Activated CD4-positive, alpha-beta T cell treated with anti-CD3 and anti-CD28 coated beads, Interleukin-2, amount 10 ng/mL, durations not matched to agents 7 days and 5 days (primary cell): ENCODE measurements at regions of chr15 and their contacts with region 1.

Region 1: DNA sequence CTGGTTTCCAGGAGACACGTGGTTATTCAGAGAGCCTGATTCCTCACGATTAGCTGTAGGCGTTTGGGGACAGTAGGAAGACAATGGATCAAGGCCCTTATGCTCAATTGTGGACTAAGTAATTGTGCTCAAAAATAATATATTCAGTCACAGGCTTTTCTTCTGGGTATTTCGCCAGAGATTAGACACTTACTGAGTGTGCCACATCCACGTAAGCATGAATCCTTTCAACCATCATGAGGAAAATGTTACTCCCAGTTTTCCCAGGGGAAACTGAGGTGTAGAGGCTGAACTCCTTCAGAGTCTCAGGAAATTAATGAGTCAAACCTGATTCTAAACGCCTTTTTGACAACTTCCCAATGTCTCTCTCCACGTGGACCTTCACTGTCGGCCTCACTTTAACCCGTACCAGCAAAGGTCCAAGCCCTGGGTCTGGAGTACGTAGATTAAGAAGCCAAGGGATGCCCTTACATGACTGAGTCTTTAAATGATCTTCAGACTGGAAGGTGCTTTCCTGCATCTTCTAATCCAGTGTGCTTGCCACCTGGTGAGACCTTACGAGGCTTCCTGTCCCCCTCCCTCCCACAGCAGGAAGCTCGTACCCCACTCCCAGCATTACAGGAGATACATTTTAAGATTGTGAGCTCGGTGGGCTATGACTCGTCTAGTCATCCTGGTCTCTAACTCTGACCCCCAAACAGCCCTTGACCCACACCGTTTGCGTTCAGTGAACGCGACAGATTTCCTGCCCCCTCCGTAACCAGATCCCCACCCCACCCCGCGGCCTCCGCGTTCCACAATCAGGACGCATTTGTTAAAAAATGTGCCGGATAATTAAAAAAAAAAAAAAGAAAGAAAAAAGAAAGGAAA is 1.7 kb downstream of the PKM start:
- DNase-seq: peak; percentile 52
- H3K4me3 Mint-ChIP-seq: peak overlapping the region; percentile 93
- H3K27ac Mint-ChIP-seq: peak overlapping the region; percentile 97
- H3K4me1 Mint-ChIP-seq: peaks cover 58% of the 10 kb centered on the region
- H3K27me3 Mint-ChIP-seq: no peaks in the 10 kb centered on the region

Region 2: GRCh38 chr15:72199711-72200212 is 29.5 kb before region 1 on chr15:
- CTCF ChIA-PET with region 1: interaction called, 36 read pairs
- POLR2A ChIA-PET with region 1: no interaction called
- DNase-seq: peak; percentile 80
- H3K4me3 Mint-ChIP-seq: no peak overlapping the region
- H3K27ac Mint-ChIP-seq: no peak overlapping the region
- H3K4me1 Mint-ChIP-seq: peaks cover 17% of the 10 kb centered on the region
- H3K27me3 Mint-ChIP-seq: peaks cover 15% of the 10 kb centered on the region

Region 3: DNA sequence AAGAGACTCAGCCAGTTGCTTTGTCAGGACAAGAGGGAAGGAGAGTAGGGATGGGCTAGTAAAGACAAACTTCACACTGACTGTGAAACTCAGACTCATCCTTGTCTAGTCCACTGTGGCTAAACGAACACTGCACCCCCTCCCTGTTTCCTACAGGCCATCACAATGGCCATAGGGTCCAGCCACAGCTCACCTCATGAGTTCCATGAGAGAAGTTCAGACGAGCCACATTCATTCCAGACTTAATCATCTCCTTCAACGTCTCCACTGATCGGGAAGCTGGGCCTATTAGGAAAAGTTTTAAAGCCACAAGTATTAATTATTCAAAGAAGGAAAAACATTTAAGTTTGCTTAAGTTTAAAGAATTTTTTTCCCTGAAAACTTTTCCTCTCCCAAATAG is 12.1 kb before region 1 on chr15:
- CTCF ChIA-PET with region 1: interaction called, 26 read pairs
- POLR2A ChIA-PET with region 1: no interaction called
- DNase-seq: no peak
- H3K4me3 Mint-ChIP-seq: no peak overlapping the region
- H3K27ac Mint-ChIP-seq: no peak overlapping the region
- H3K4me1 Mint-ChIP-seq: peaks cover 31% of the 10 kb centered on the region
- H3K27me3 Mint-ChIP-seq: no peaks in the 10 kb centered on the region

Region 4: GRCh38 chr15:72272213-72273002 is 43.1 kb after region 1 on chr15 and contains the start of gene PARP6:
- CTCF ChIA-PET with region 1: interaction called, 18 read pairs
- POLR2A ChIA-PET with region 1: interaction called, 5 read pairs
- DNase-seq: peak; percentile 98
- H3K4me3 Mint-ChIP-seq: peak within 1 kb of the TSS; percentile 86
- H3K27ac Mint-ChIP-seq: peak within 1 kb of the TSS; percentile 93
- H3K4me1 Mint-ChIP-seq: peaks cover 38% of the 10 kb centered on the region
- H3K27me3 Mint-ChIP-seq: no peaks in the 10 kb centered on the region
- total RNA-seq, gene PARP6: 62.9 to 69.2 TPM